Motor neuron (in vitro differentiated cells): ENCODE measurements at regions of chr9 and their contacts with region 1.

Region 1: DNA sequence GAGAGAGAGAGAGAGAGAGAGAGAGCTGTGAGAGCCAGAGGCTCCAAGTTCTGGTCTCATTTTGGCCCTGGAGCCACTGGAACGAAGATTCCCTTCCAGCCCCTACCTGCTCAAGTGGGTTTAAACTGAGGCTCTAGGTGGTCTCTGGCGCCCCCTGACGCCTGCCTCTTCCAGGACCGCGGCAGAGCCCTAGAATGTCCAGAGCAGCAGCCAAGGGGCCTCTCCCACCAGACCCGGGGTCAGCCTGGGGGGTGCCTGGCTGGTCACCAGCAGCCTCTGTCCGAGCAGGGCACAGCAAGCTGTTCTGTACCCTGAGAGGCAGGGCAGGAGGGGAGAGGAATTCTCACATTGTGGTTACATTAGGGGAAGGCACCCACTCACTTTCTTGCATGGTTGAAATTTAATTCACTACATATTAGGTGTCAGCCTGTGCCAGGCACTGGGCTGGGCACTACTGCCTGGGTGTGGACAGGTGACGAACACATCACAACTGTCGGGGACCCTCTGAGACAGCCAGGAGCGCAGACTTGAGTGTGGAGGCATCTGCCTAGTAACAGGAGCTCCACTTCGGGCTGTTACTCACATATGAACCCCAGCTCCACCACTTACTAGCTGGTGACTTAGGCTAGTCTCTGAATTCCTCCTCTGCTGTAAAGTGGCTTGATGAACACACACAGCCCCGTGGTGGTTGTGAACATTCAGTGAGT is 44.5 kb downstream of the AMBP start:
- ATAC-seq: peak in 7 of 8 experiments; percentile 12 to 55 (median 35)
- H3K4me3 ChIP-seq: no peak overlapping the region
- H3K27ac ChIP-seq: no peak overlapping the region
- H3K4me1 ChIP-seq: peaks cover 5 to 6% of the 10 kb centered on the region in 2 donors

Region 2: GRCh38 chr9:113712023-113712422 is 321.5 kb before region 1 on chr9:
- in situ Hi-C with region 1: loop called in 1 of 9 experiments (anchors 25 kb)
- ATAC-seq: peak in 1 of 8 experiments; percentile 44
- H3K4me3 ChIP-seq: no peak overlapping the region
- H3K27ac ChIP-seq: no peak overlapping the region
- H3K4me1 ChIP-seq: no peaks in the 10 kb centered on the region

Region 3: DNA sequence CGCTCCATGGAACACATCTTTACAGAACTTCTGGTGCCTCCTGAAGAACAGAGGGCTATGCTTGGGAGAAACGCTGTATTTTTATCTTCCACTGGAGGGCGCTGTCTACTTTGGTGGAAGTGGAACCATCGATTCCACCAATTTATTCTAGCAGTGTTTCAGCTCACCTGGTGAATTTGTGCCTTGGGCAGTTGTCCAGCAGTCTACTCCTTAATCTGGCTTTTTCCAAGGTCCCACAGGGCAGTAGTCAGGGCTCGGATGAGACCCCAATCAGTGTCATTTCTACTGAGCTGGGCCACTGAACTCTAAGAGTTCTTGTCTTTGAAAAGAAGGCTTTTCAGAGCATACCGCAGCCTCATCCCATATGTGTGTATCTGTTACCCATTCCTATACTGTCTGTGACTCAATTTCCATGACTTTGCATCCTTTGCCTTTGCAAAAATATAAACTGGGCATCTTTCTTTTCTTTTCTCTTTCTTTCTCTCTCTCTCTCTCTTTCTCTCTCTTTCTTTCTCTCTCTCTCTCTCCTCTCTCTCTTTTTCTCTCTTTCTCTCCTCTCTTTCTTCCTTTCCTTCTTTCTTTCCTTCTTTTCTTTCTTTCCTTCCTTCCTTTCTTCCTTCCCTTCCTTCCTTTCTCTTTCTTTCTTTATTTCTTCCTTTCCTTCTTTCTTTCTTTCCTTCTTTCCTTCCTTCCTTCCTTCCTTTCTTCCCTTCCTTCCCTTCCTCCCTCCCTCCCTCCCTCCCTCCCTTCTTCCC is 295.9 kb before region 1 on chr9:
- in situ Hi-C with region 1: loop called in 1 of 9 experiments (anchors 25 kb)
- ATAC-seq: peak; percentile 56 to 81 (median 70)
- H3K4me3 ChIP-seq: no peak overlapping the region
- H3K27ac ChIP-seq: no peak overlapping the region
- H3K4me1 ChIP-seq: no peaks in the 10 kb centered on the region

Region 4: GRCh38 chr9:113772121-113772810 is 261.3 kb before region 1 on chr9:
- in situ Hi-C with region 1: loop called in 1 of 9 experiments (anchors 25 kb)
- ATAC-seq: peak in 2 of 8 experiments; percentile 48 to 81
- H3K4me3 ChIP-seq: no peak overlapping the region
- H3K27ac ChIP-seq: no peak overlapping the region
- H3K4me1 ChIP-seq: peaks cover 6 to 21% of the 10 kb centered on the region in 2 donors

Region 5: GRCh38 chr9:113929634-113930389 is 103.7 kb before region 1 on chr9:
- in situ Hi-C with region 1: loop called in 1 of 9 experiments (anchors 25 kb)
- ATAC-seq: no peak
- H3K4me3 ChIP-seq: no peak overlapping the region
- H3K27ac ChIP-seq: no peak overlapping the region
- H3K4me1 ChIP-seq: peaks cover 0 to 7% of the 10 kb centered on the region in 2 donors

Region 6: GRCh38 chr9:114141553-114142402 is 108.2 kb after region 1 on chr9:
- in situ Hi-C with region 1: loop called in 1 of 9 experiments (anchors 25 kb)
- ATAC-seq: peak in 2 of 8 experiments; percentile 23 to 76
- H3K4me3 ChIP-seq: no peak overlapping the region
- H3K27ac ChIP-seq: no peak overlapping the region
- H3K4me1 ChIP-seq: no peaks in the 10 kb centered on the region